Activated CD4-positive, alpha-beta memory T cell treated with anti-CD3 and anti-CD28 coated beads for 36 hours (primary cell): ENCODE measurements at regions of chr17 and their contacts with region 1.

Region 1: GRCh38 chr17:8997994-8998628 is 23.2 kb upstream of the NTN1 start:
- DNase-seq: peak; percentile 84
- H3K4me3 Mint-ChIP-seq: no peak overlapping the region
- H3K27ac Mint-ChIP-seq: peak overlapping the region; percentile 26
- H3K4me1 Mint-ChIP-seq: peaks cover 9% of the 10 kb centered on the region
- H3K27me3 Mint-ChIP-seq: peaks cover 23% of the 10 kb centered on the region

Region 2: GRCh38 chr17:8708025-8708461 is 290.1 kb before region 1 on chr17:
- CTCF ChIA-PET with region 1: no interaction called
- POLR2A ChIA-PET with region 1: no interaction called
- intact Hi-C with region 1: no loop called
- DNase-seq: no peak
- H3K4me3 Mint-ChIP-seq: no peak overlapping the region
- H3K27ac Mint-ChIP-seq: no peak overlapping the region
- H3K4me1 Mint-ChIP-seq: no peaks in the 10 kb centered on the region
- H3K27me3 Mint-ChIP-seq: peaks cover 32% of the 10 kb centered on the region

Region 3: GRCh38 chr17:8745586-8746500 is 252.3 kb before region 1 on chr17:
- CTCF ChIA-PET with region 1: interaction called, 16 read pairs
- POLR2A ChIA-PET with region 1: no interaction called
- intact Hi-C with region 1: loop called (anchors 5 kb)
- DNase-seq: peak; percentile 84
- H3K4me3 Mint-ChIP-seq: peak overlapping the region; percentile 80
- H3K27ac Mint-ChIP-seq: peak overlapping the region; percentile 74
- H3K4me1 Mint-ChIP-seq: peaks cover 9% of the 10 kb centered on the region
- H3K27me3 Mint-ChIP-seq: no peaks in the 10 kb centered on the region

Region 4: GRCh38 chr17:8785547-8786413 is 212.3 kb before region 1 on chr17:
- CTCF ChIA-PET with region 1: interaction called, 19 read pairs
- POLR2A ChIA-PET with region 1: no interaction called
- intact Hi-C with region 1: loop called (anchors 5 kb)
- DNase-seq: peak; percentile 77
- H3K4me3 Mint-ChIP-seq: no peak overlapping the region
- H3K27ac Mint-ChIP-seq: no peak overlapping the region
- H3K4me1 Mint-ChIP-seq: peaks cover 2% of the 10 kb centered on the region
- H3K27me3 Mint-ChIP-seq: peaks cover under 1% of the 10 kb centered on the region

Region 5: DNA sequence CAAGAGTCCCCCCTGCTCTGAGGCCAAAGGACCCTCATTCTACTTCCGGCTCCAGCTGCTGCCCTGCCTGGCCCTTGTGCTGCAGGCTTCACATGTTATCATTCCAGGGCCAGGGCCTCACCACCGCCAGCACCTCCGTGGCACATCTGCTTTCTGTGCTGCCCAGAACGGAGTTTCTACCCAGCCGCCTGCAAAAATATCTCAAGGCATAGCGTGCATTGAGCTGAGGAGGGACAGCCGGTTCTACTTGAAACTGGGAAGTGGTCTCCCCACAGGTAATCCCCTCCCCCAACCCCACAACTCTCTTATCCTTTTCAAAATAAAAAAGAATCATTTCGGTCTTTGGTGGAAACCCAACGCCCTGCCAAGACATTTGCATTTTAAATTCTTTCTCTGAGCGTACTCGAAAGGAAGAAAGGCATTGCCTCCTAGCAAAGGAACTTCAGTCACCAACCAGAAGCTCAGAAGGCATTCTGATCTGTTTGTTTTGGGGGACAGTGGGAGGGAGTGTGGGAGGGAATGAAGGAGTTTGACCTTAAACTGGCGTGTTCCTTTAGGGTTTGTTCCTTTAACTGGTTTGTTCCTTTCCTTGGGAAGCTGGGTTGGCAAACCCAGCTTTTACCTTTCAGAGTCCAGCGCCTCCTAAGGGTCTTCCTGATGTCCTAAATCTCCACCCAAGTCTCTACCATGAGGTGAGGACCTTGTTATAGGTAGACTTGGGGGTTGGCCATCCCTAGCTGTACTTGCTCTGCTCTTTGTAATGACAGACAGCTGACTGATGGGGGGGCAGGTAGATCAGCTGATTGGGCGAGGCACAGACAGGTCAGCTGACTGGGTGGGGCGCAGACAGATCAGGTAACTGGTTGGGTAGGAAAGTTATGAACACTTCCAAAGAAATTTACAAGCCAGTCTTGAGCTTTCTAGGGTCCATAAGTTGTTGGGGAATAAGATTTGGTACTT is 97.2 kb before region 1 on chr17:
- CTCF ChIA-PET with region 1: interaction called, 38 read pairs
- POLR2A ChIA-PET with region 1: interaction called, 3 read pairs
- intact Hi-C with region 1: no loop called
- DNase-seq: no peak
- H3K4me3 Mint-ChIP-seq: no peak overlapping the region
- H3K27ac Mint-ChIP-seq: no peak overlapping the region
- H3K4me1 Mint-ChIP-seq: peaks cover 60% of the 10 kb centered on the region
- H3K27me3 Mint-ChIP-seq: no peaks in the 10 kb centered on the region

Region 6: GRCh38 chr17:8986290-8986689 is 11.8 kb before region 1 on chr17:
- CTCF ChIA-PET with region 1: interaction called, 22 read pairs
- POLR2A ChIA-PET with region 1: interaction called, 3 read pairs
- intact Hi-C with region 1: no loop called
- DNase-seq: no peak
- H3K4me3 Mint-ChIP-seq: no peak overlapping the region
- H3K27ac Mint-ChIP-seq: no peak overlapping the region
- H3K4me1 Mint-ChIP-seq: peaks cover 15% of the 10 kb centered on the region
- H3K27me3 Mint-ChIP-seq: peaks cover 3% of the 10 kb centered on the region

Region 7: DNA sequence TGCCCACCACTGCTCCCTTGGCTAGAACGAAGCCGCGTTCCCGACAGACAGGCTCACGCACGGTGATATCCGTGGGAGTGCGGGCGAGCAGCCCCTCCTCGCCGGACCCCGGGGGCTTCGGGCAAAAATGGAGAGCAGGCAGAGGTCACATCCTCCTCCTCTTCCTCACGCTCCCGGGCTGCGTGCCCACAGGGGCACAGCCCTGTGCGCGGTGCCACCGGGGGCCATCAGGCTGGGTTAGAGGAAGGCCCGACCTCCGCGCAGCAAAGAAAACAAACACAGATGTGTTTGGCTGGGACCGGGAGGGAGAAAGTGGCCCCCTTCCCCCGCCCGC is 22.7 kb after region 1 on chr17:
- CTCF ChIA-PET with region 1: interaction called, 14 read pairs
- POLR2A ChIA-PET with region 1: no interaction called
- intact Hi-C with region 1: no loop called
- DNase-seq: no peak
- H3K4me3 Mint-ChIP-seq: peak overlapping the region; percentile 24
- H3K27ac Mint-ChIP-seq: no peak overlapping the region
- H3K4me1 Mint-ChIP-seq: peaks cover 10% of the 10 kb centered on the region
- H3K27me3 Mint-ChIP-seq: peaks cover 48% of the 10 kb centered on the region

Region 8: GRCh38 chr17:9032583-9032982 is 34.5 kb after region 1 on chr17:
- CTCF ChIA-PET with region 1: no interaction called
- POLR2A ChIA-PET with region 1: no interaction called
- intact Hi-C with region 1: no loop called
- DNase-seq: no peak
- H3K4me3 Mint-ChIP-seq: no peak overlapping the region
- H3K27ac Mint-ChIP-seq: no peak overlapping the region
- H3K4me1 Mint-ChIP-seq: no peaks in the 10 kb centered on the region
- H3K27me3 Mint-ChIP-seq: peaks cover 27% of the 10 kb centered on the region